CD4-positive, alpha-beta T cell (primary cell): ENCODE measurements at regions of chr9 and their contacts with region 1.

Region 1: DNA sequence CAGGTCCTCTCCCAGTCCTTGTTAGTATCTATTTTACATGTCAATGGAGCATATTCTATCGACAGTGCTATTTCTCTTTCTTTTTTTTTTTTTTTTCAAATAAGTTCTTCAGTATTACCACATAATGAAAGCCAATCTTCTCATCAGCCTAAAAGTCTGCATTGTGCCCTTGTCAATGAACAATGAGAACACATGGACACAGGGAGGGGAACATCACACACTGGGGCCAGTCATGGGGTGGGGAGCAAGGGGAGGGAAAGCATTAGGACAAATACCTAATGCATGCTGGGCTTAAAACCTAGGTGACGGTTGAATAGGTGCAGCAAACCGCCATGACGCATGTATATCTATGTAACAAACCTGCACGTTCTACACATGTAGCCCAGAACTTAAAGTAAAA is 47.7 kb upstream of the TEX48 start:
- DNase-seq: no peak
- ATAC-seq: no peak
- H3K4me3 ChIP-seq: no peak overlapping the region
- H3K4me3 Mint-ChIP-seq: no peak overlapping the region
- H3K27ac ChIP-seq: no peak overlapping the region
- H3K27ac Mint-ChIP-seq: no peak overlapping the region
- H3K4me1 ChIP-seq: peaks cover under 1% of the 10 kb centered on the region
- H3K4me1 Mint-ChIP-seq: no peaks in the 10 kb centered on the region
- H3K27me3 ChIP-seq: no peaks in the 10 kb centered on the region
- H3K27me3 Mint-ChIP-seq: no peaks in the 10 kb centered on the region
- CTCF ChIP-seq: no peak

Region 2: DNA sequence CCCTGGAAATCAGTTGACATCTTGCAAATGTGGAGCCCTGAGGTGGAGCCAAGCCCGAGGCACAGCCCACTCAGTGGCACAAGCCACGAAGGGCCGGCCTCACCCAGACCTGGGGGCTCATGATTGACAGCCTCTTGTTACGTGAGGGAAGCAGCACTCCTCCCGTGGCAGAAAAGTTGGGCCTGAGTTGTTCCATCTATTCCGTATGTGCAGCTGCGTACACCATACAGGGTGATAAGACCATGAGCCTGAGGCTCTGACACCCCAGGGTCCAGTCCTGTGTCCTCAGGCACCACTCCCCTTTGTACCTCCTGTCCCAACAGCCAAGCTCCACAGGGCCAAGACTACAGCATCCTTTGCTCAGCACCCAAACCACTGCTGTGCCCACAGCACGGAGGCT is 402.0 kb before region 1 on chr9:
- CTCF ChIA-PET with region 1: no interaction called
- POLR2A ChIA-PET with region 1: no interaction called
- intact Hi-C with region 1: no loop called
- DNase-seq: no peak
- ATAC-seq: no peak
- H3K4me3 ChIP-seq: no peak overlapping the region
- H3K4me3 Mint-ChIP-seq: no peak overlapping the region
- H3K27ac ChIP-seq: no peak overlapping the region
- H3K27ac Mint-ChIP-seq: no peak overlapping the region
- H3K4me1 ChIP-seq: peaks cover 9% of the 10 kb centered on the region
- H3K4me1 Mint-ChIP-seq: peaks cover 19% of the 10 kb centered on the region
- H3K27me3 ChIP-seq: no peaks in the 10 kb centered on the region
- H3K27me3 Mint-ChIP-seq: no peaks in the 10 kb centered on the region
- CTCF ChIP-seq: no peak

Region 3: DNA sequence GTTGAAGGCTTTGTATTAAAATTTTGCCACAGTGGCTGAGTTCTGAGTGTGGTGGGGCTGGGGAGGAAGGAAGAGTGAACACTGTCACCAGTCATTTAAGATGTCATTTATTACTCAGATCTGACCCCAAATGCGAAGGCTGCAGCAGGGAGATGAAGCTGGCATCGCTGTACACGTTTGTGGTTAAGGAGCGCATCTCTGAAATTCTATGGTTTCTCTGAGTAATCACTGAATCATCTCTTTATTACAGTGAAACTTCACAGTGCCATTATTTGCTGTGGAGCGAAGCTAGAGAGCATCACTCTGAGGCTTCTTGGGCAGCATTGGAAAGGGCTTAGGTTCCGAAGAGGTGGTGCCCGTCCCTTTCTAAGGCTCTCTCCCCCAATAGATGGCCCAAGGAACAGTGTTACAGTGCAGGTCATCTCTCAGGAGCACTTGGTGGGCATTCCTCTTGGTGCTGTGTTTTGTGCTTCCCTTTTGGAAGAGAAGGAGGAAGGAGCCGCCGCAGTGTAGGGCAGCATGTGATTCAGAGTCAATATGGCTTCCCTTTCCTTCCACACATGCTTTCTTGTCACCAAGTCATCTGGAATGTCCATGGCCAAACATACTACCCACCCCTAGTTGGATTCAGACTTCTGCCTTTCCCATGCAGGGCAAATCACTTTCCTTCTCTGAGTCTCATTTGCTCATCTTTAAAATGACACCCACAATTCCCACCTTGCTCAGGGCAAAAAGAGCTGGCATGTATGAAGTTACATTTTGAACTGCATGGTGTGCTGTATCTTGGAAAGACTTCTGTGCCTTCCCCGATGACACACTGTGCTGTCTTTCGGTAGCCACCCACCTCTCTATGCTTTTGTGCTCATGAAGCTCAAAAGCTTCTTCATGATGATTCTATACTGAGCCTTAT is 38.4 kb before region 1 on chr9:
- CTCF ChIA-PET with region 1: no interaction called
- POLR2A ChIA-PET with region 1: interaction called, 5 read pairs
- intact Hi-C with region 1: loop called in 1 of 2 experiments (anchors 2 kb)
- DNase-seq: peak; percentile 17 to 80 (median 52)
- ATAC-seq: peak; percentile 89
- H3K4me3 ChIP-seq: peak overlapping the region; percentile 38
- H3K4me3 Mint-ChIP-seq: peak overlapping the region; percentile 30
- H3K27ac ChIP-seq: peak overlapping the region in 1 of 2 donors; percentile 69
- H3K27ac Mint-ChIP-seq: peak overlapping the region; percentile 64
- H3K4me1 ChIP-seq: peaks cover 22% of the 10 kb centered on the region
- H3K4me1 Mint-ChIP-seq: peaks cover 14% of the 10 kb centered on the region
- H3K27me3 ChIP-seq: no peaks in the 10 kb centered on the region
- H3K27me3 Mint-ChIP-seq: no peaks in the 10 kb centered on the region
- CTCF ChIP-seq: no peak